ENCODE measurements at regions of chr4 and their contacts with region 1.

Region 1: DNA sequence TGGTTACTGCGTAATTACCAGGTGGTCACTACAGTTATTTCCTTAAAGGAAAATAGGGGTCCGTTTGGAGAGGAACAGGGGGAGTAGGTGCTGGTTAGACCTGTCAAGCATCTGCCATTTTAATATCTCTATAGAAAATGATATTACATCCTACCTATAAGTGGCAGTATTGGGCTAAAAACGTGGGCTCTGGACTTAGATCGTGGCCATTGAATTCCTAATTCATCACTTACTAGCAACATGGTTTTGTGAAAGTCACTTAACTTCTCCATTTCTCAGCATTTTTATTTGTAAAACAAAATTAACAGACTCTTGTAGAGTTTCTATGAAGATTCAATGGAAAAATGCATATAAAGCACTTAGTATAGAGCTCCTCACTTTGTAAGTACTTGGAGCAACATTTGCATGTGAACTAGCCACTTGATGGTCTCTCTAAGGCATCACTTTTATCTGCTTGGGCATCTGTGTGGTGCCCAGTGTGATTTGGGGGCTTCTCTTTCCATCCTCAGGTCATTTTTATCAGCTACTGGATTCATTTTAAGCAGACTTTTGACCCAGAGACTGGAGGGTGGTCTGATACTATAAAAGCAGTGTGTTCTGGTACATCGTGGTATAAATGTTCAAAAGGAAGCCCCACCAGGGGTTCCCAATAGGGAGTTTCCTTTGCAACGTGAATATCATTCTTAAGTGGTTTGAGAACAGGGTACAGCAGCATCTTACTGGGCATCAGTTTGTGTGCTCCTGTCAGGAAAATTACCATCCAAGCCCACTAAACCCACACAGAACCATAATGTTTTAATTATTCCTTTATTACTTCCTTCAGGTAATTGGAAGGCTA is 42.7 kb upstream of the RASSF6 start:
- DNase-seq: no peak
- ATAC-seq: peak; percentile 61
- H3K4me3 ChIP-seq: no peak overlapping the region
- H3K4me3 Mint-ChIP-seq: no peak overlapping the region
- H3K27ac ChIP-seq: no peak overlapping the region
- H3K27ac Mint-ChIP-seq: no peak overlapping the region
- H3K4me1 ChIP-seq: no peaks in the 10 kb centered on the region
- H3K4me1 Mint-ChIP-seq: no peaks in the 10 kb centered on the region
- H3K27me3 ChIP-seq: no peaks in the 10 kb centered on the region
- H3K27me3 Mint-ChIP-seq: peaks cover 0 to 11% (median 7%) of the 10 kb centered on the region in 5 donors

Region 2: GRCh38 chr4:72987741-72988729 is 674.9 kb before region 1 on chr4:
- CTCF ChIA-PET with region 1: no interaction called
- POLR2A ChIA-PET with region 1: no interaction called
- intact Hi-C with region 1: loop called in 1 of 2 experiments (anchors 5 kb)
- DNase-seq: no peak
- ATAC-seq: no peak
- H3K4me3 ChIP-seq: no peak overlapping the region
- H3K4me3 Mint-ChIP-seq: no peak overlapping the region
- H3K27ac ChIP-seq: no peak overlapping the region
- H3K27ac Mint-ChIP-seq: no peak overlapping the region
- H3K4me1 ChIP-seq: no peaks in the 10 kb centered on the region
- H3K4me1 Mint-ChIP-seq: no peaks in the 10 kb centered on the region
- H3K27me3 ChIP-seq: no peaks in the 10 kb centered on the region
- H3K27me3 Mint-ChIP-seq: peaks cover 2 to 9% (median 6%) of the 10 kb centered on the region in 5 donors

Region 3: GRCh38 chr4:73864365-73864764 is 201.4 kb after region 1 on chr4:
- CTCF ChIA-PET with region 1: no interaction called
- POLR2A ChIA-PET with region 1: no interaction called
- intact Hi-C with region 1: loop called in 1 of 2 experiments (anchors 5 kb)
- DNase-seq: no peak
- ATAC-seq: no peak
- H3K4me3 ChIP-seq: no peak overlapping the region
- H3K4me3 Mint-ChIP-seq: no peak overlapping the region
- H3K27ac ChIP-seq: no peak overlapping the region
- H3K27ac Mint-ChIP-seq: no peak overlapping the region
- H3K4me1 ChIP-seq: no peaks in the 10 kb centered on the region
- H3K4me1 Mint-ChIP-seq: peaks cover 0 to 6% (median 0%) of the 10 kb centered on the region in 7 donors
- H3K27me3 ChIP-seq: no peaks in the 10 kb centered on the region
- H3K27me3 Mint-ChIP-seq: peaks cover 12 to 20% (median 17%) of the 10 kb centered on the region in 5 donors